Endothelial cell of umbilical vein (primary cell): ENCODE measurements at regions of chr13 and their contacts with region 1.

Region 1: GRCh38 chr13:72727417-72728289 is at the starts of genes BORA and MZT1:
- DNase-seq: peak; percentile 99
- H3K4me3 ChIP-seq: peak within 1 kb of the TSS; percentile 75 to 77 (median 76)
- H3K27ac ChIP-seq: peak within 1 kb of the TSS; percentile 41
- H3K4me1 ChIP-seq: peaks cover 24% of the 10 kb centered on the region
- H3K27me3 ChIP-seq: no peaks in the 10 kb centered on the region
- CTCF ChIP-seq: no peak
- POLR2A ChIP-seq: peak; percentile 65
- total RNA-seq, gene BORA: 11.2 and 11.5 TPM in 2 replicates
- total RNA-seq, gene MZT1: 19.4 and 22.6 TPM in 2 replicates

Region 2: GRCh38 chr13:72652681-72653080 is 75.0 kb before region 1 on chr13:
- CTCF ChIA-PET with region 1: interaction called, 3 read pairs
- POLR2A ChIA-PET with region 1: no interaction called
- dilution Hi-C with region 1: no loop called
- intact Hi-C with region 1: loop called (anchors 2 kb)
- DNase-seq: peak; percentile 80
- H3K4me3 ChIP-seq: no peak overlapping the region
- H3K27ac ChIP-seq: no peak overlapping the region
- H3K4me1 ChIP-seq: peaks cover 9% of the 10 kb centered on the region
- H3K27me3 ChIP-seq: peaks cover 26 to 51% of the 10 kb centered on the region in 2 experiments
- CTCF ChIP-seq: no peak
- POLR2A ChIP-seq: no peak

Region 3: GRCh38 chr13:72781451-72782439 is 54.1 kb after region 1 on chr13 and contains the starts of genes DIS3 and PIBF1:
- CTCF ChIA-PET with region 1: no interaction called
- POLR2A ChIA-PET with region 1: no interaction called
- dilution Hi-C with region 1: no loop called
- intact Hi-C with region 1: loop called (anchors 1 kb)
- DNase-seq: peak; percentile 98
- H3K4me3 ChIP-seq: peak within 1 kb of the TSS; percentile 69 to 96 (median 77)
- H3K27ac ChIP-seq: peak within 1 kb of the TSS; percentile 71
- H3K4me1 ChIP-seq: peaks cover 25% of the 10 kb centered on the region
- H3K27me3 ChIP-seq: no peaks in the 10 kb centered on the region
- CTCF ChIP-seq: no peak
- POLR2A ChIP-seq: peak; percentile 77
- total RNA-seq, gene DIS3: 31.4 and 32.8 TPM in 2 replicates
- total RNA-seq, gene PIBF1: 18.2 and 18.4 TPM in 2 replicates